Activated T-helper 1 cell treated with anti-CD3 and anti-CD28 coated beads, Interleukin-12 subunit alpha, Interleukin-12 subunit beta, Interleukin-2, Interleukin-4 antibody, amounts not matched to agents 30 ng/mL and 10 ng/mL and 1 ng/mL, durations not matched to agents 14 hours and 24 hours and 36 hours (primary cell): ENCODE measurements at regions of chr12 and their contacts with region 1.

Region 1: DNA sequence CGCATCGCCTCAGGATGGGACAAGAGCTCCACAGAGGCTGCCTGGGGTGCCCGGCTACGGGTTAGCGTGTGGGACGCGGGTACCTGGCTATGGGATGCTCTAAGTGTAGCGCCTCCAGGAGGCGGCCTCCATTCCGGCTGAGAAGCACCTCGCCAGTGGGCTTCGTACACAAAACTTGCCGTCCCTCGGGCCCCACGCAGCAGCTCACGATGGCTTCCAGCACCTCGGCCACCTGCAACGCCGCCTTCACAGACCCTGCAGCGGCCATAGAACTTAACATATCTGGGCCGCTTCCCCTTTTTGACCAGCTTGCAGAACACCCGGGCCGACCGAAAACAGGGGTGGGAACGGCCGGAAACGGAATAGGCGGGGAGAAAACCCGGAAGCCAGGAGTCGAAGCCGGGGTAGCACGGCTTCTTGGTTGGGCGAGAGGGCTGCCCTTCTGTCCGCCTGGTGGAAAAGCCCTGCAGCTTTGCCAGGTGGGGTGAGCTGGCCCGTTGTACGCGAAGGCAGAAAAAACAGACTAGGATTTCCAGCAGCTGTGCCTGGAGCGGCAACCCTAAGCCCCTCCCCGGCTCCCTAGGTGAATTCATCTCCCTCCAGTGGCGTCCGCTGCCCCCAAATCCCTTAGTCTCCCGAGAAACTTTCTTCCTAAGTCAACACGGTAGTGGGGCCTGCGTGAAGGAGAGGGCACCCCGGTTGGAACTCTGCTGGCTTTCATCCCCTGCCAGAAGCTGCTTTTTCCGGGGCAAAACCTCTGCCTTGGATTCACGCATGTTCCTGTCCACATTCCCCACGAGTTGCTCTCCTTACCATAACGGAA is at the start of gene BBS10:
- DNase-seq: peak; percentile 81
- H3K4me3 Mint-ChIP-seq: peak within 1 kb of the TSS; percentile 95
- H3K27ac Mint-ChIP-seq: peak within 1 kb of the TSS; percentile 88
- H3K4me1 Mint-ChIP-seq: peaks cover 29% of the 10 kb centered on the region
- H3K27me3 Mint-ChIP-seq: peaks cover 1% of the 10 kb centered on the region
- total RNA-seq, gene BBS10: 3.7 and 4.1 TPM in 2 replicates

Region 2: DNA sequence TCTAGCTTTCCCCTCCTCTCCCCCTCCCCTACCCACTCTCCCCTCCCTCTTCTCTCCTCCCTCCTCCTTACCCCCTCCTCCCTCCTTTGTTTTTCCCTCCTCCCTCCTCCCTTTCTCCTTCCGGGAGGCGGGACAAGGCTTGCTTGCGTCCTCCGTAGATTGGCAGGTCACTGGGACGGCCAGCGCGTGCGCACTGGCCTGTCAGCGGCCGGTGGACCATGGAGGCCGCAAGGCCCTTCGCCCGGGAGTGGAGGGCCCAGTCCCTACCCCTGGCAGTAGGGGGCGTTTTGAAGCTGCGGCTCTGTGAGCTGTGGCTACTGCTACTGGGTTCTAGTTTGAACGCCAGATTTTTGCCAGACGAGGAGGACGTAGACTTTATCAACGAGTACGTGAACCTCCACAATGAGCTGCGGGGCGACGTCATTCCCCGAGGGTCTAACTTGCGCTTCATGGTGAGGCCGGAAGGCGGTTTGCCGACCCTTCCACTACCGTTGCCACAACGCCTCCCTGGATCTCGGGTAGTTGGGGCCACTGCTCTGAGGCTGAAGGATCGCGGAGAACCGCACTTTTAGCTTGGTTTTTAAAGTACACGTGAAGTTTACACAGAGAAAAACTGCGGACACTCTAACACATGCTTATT is 957.3 kb before region 1 on chr12 and contains the start of gene GLIPR1L2:
- intact Hi-C with region 1: loop called (anchors 2 kb)
- DNase-seq: peak; percentile 82
- H3K4me3 Mint-ChIP-seq: peak within 1 kb of the TSS; percentile 86
- H3K27ac Mint-ChIP-seq: peak within 1 kb of the TSS; percentile 79
- H3K4me1 Mint-ChIP-seq: peaks cover 39% of the 10 kb centered on the region
- H3K27me3 Mint-ChIP-seq: peaks cover 5% of the 10 kb centered on the region
- total RNA-seq, gene GLIPR1L2: not detected in 2 replicates

Region 3: DNA sequence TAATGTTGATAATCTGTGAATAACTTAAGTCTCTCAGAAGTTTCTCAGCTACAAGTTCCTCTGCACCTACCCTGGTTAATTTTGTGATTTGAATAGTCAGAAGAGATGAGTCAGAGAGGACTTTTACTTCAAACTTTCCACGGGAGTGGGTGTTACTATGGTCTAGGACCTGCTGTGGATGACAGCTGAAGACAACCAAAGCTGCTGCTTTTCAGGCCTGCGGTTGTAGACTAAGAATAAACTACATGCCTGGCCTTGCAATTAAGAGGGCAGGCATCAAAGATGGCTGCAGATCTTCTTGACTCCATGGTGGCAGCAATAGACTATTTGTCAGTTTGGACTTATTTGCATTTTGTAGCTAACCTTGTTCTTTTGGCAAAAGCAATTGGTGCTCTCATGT is 609.8 kb before region 1 on chr12:
- intact Hi-C with region 1: loop called (anchors 1 kb)
- DNase-seq: peak; percentile 9
- H3K4me3 Mint-ChIP-seq: no peak overlapping the region
- H3K27ac Mint-ChIP-seq: peak overlapping the region; percentile 53
- H3K4me1 Mint-ChIP-seq: peaks cover 22% of the 10 kb centered on the region
- H3K27me3 Mint-ChIP-seq: peaks cover 5% of the 10 kb centered on the region

Region 4: DNA sequence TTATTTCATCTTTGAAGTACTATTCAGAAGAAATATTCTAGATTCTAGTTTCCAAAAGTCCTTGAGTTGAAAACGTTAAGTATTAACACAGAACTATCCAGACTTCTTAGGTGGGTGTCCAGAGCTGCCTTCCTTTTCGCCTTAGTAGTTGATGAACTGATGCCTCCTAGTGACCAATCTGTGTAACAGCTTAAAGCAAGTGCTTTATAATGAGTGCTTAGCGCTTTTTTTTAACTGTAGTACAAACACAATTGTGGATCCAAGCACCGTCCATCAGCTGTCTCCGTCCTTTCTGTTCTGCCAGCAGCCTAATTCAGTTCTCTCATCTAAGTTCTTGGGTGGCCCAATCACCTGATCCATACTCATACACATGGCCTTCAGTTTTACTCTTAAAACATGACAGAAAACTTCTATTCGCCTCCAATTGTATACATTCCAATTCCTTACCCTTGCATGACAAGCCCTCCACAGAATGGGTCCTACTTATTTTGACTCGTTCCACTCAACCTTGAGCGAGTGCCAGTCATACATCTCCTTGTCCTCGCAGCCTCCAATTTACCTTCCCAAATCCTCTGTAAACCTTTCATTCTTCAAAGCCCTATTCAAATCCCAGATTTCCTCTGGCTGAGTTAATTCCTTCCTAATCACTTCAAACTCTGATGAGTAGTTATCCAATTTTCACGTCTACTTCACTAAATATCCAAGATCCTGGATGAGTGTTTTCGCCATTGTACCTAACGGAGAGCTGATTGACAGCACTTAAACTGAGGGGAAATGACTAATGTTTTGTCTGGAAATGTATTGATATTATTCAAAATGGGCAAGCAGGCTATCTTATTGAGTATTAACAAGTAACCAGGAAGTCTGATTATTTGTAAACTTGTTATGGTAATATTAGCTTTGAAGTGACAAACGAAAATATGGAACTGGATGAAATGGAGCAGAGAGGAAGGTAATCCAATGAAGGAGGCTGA is 310.9 kb before region 1 on chr12:
- intact Hi-C with region 1: loop called (anchors 2 kb)
- DNase-seq: peak; percentile 26
- H3K4me3 Mint-ChIP-seq: no peak overlapping the region
- H3K27ac Mint-ChIP-seq: peak overlapping the region; percentile 0
- H3K4me1 Mint-ChIP-seq: peaks cover 24% of the 10 kb centered on the region
- H3K27me3 Mint-ChIP-seq: no peaks in the 10 kb centered on the region

Region 5: DNA sequence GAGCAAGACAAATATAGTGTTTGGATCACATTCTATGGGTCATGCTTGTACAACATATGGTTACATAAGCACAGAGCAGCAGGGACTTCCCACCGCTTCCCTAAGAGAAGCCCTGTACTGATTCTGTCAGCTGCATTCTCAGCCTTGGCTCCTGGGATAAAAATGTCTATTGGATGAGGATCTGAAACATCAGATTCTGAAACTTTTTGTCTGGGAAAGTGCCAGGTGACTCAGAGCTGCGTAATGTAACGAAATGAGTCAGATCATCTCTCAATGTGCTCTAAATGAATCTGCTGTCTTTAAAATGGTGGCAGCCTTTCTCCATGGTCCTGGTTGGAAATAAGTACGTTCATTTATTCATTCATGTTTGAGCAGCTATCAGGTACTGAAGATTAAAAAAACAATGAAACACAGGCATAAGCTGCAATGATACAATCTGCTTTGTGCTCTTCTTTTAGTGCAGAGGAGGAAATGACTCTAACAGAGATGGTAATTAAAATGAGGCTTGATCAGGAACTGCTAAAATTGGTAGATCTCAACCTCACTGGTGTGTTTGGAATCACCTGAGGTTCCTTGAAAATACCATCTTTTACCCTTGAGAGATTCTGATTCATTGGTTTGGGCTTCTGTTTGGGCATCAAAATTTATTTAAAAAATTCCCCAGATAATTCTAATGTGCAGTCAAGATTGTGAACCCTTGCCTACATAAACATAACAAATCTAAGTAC is 164.7 kb before region 1 on chr12:
- intact Hi-C with region 1: loop called (anchors 1 kb)
- DNase-seq: no peak
- H3K4me3 Mint-ChIP-seq: no peak overlapping the region
- H3K27ac Mint-ChIP-seq: no peak overlapping the region
- H3K4me1 Mint-ChIP-seq: peaks cover 14% of the 10 kb centered on the region
- H3K27me3 Mint-ChIP-seq: peaks cover 36% of the 10 kb centered on the region

Region 6: GRCh38 chr12:76455582-76456345 is 107.5 kb after region 1 on chr12:
- intact Hi-C with region 1: loop called (anchors 1 kb)
- DNase-seq: peak; percentile 5
- H3K4me3 Mint-ChIP-seq: no peak overlapping the region
- H3K27ac Mint-ChIP-seq: no peak overlapping the region
- H3K4me1 Mint-ChIP-seq: peaks cover 15% of the 10 kb centered on the region
- H3K27me3 Mint-ChIP-seq: no peaks in the 10 kb centered on the region

Region 7: DNA sequence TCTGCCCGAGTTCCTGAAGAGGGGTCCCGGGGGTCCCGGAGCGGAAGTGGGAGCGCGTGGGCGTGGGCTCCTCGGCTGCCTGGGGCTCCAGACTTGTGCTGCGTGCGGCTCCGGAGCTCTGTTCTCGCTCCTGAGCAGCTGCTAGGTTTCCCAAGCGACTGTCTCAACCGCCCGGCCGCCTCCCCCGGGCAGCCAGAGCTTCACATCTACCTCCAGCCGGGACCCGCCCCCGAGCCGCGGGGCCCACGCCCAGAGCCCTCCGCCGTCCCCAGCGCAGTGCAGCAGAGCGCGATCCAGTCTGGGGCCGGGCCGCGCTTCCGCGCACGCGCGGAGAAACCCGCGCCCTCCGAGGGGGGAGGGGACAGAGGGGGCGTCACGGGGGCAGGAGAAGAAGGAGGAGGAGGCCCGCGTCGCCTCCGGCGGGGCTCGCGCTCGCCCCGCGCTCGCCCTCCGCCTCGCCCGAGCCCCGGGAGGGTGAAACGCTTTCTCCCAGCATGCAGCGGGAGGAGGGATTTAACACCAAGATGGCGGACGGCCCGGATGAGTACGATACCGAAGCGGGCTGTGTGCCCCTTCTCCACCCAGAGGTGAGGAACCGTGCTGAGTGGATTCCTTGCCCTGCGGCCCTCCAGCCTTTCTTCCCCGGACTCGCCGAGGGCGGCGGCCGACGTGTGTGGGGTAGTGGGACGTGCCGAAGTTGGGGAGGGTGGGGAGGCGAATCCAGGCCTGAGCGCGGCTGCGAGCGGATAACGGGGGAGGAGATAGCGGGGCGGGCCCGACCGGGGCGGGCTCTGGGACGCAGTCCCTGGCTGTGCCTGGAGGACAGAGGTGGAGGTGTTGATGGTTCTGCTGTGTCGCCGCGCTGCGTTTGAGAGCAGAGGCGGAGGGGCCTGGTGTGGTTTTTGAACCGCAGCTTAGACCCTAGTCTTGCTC is 415.7 kb after region 1 on chr12 and contains the start of gene ZDHHC17:
- intact Hi-C with region 1: loop called (anchors 5 kb)
- DNase-seq: peak; percentile 91
- H3K4me3 Mint-ChIP-seq: peak within 1 kb of the TSS; percentile 98
- H3K27ac Mint-ChIP-seq: peak within 1 kb of the TSS; percentile 94
- H3K4me1 Mint-ChIP-seq: peaks cover 19% of the 10 kb centered on the region
- H3K27me3 Mint-ChIP-seq: peaks cover 3% of the 10 kb centered on the region
- total RNA-seq, gene ZDHHC17: 23.3 and 32.3 TPM in 2 replicates